Sigmoid colon (tissue), 7 donors: ENCODE measurements at regions of chr5 and their contacts with region 1.

Region 1: GRCh38 chr5:111092062-111092853 is at the start of gene WDR36:
- DNase-seq: peak; percentile 94
- H3K4me3 ChIP-seq: peak within 1 kb of the TSS; percentile 67 to 93 (median 84)
- H3K27ac ChIP-seq: peak within 1 kb of the TSS; percentile 82 to 87 (median 84)
- H3K4me1 ChIP-seq: peaks cover 0 to 27% (median 16%) of the 10 kb centered on the region in 4 donors
- H3K27me3 ChIP-seq: no peaks in the 10 kb centered on the region
- CTCF ChIP-seq: no peak
- EP300 ChIP-seq: no peak
- POLR2A ChIP-seq: no peak
- total RNA-seq, gene WDR36: 14.4 to 22.8 (median 19.5) TPM

Region 2: DNA sequence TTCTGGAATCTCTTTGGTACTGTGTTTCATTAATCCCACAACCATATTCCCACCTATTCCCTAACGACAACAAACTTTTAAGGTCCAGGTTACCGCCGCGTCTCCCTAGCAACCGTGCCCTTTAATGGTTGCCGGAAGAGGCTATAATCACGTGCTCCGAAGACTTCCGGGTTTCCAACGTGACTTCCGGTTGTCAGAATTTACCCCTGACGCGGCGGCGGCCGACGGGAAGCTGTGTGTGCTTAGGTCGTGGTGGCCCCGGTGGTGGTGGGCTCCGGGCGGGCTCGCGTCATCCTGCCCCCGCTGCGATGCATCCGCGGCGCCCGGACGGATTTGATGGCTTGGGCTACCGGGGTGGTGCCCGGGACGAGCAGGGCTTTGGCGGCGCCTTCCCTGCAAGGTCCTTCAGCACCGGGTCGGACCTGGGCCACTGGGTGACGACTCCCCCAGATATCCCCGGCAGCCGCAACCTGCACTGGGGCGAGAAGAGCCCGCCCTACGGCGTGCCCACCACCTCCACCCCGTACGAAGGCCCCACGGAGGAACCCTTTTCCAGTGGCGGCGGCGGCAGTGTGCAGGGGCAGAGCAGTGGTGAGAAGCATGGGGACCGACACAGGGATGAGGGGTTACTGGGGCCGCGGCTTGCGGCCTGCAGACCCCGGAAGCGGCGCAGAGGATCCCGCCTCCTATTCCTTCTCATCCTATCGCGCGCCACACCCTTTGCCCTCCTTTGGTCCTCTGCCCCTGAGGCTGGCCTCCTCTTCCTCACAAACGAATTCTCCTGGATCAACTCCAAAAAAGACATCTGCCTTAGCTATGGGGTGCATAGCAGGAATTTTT is 353.2 kb before region 1 on chr5 and contains the start of gene SLC25A46:
- intact Hi-C with region 1: loop called (anchors 5 kb)
- DNase-seq: peak; percentile 93
- H3K4me3 ChIP-seq: peak within 1 kb of the TSS; percentile 85 to 94 (median 90)
- H3K27ac ChIP-seq: peak within 1 kb of the TSS; percentile 86 to 94 (median 91)
- H3K4me1 ChIP-seq: peaks cover 0 to 27% (median 17%) of the 10 kb centered on the region in 4 donors
- H3K27me3 ChIP-seq: no peaks in the 10 kb centered on the region
- CTCF ChIP-seq: no peak
- EP300 ChIP-seq: no peak
- POLR2A ChIP-seq: no peak
- total RNA-seq, gene SLC25A46: 51.6 to 71.7 (median 59.3) TPM

Region 3: GRCh38 chr5:110757118-110757729 is 335.0 kb before region 1 on chr5:
- intact Hi-C with region 1: loop called (anchors 5 kb)
- DNase-seq: no peak
- H3K4me3 ChIP-seq: no peak overlapping the region
- H3K27ac ChIP-seq: no peak overlapping the region
- H3K4me1 ChIP-seq: no peaks in the 10 kb centered on the region
- H3K27me3 ChIP-seq: no peaks in the 10 kb centered on the region
- CTCF ChIP-seq: peak; percentile 33 to 75 (median 57)
- EP300 ChIP-seq: no peak
- POLR2A ChIP-seq: no peak

Region 4: DNA sequence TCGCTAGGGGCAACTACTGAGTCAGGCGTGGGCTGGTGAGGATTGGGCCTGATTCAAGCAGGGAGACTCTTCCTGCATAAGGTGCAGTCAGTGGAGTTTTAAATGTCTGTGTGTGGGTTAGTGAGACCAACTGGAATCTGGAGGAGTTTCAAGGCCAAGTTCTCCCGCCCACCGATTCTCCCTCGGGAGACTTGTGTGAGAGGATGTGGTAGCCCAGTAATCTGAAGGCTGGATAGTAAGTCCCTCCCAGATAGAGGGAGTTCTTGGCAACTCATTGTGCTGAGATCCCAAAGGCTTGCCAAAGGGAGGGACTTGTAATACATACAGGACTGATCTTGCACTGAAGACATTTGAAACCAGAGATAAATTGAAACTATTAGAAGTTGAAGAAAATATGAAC is 51.7 kb after region 1 on chr5:
- intact Hi-C with region 1: no loop called
- DNase-seq: no peak
- H3K4me3 ChIP-seq: no peak overlapping the region
- H3K27ac ChIP-seq: no peak overlapping the region
- H3K4me1 ChIP-seq: no peaks in the 10 kb centered on the region
- H3K27me3 ChIP-seq: no peaks in the 10 kb centered on the region
- CTCF ChIP-seq: no peak
- EP300 ChIP-seq: no peak
- POLR2A ChIP-seq: no peak